Ascending aorta (tissue), 2 donors: ENCODE measurements at regions of chr3 and their contacts with region 1.

Region 1: GRCh38 chr3:52705688-52706686 is at the starts of genes GLT8D1 and SPCS1:
- DNase-seq: peak in 1 of 2 donors; percentile 89
- H3K4me3 ChIP-seq: peak within 1 kb of the TSS; percentile 85 to 86
- H3K27ac ChIP-seq: peak within 1 kb of the TSS; percentile 85 to 89
- H3K4me1 ChIP-seq: peaks cover 10 to 23% of the 10 kb centered on the region in 2 donors
- H3K27me3 ChIP-seq: no peaks in the 10 kb centered on the region
- CTCF ChIP-seq: no peak
- total RNA-seq, gene GLT8D1: 38.3 TPM
- total RNA-seq, gene SPCS1: 170 TPM

Region 2: GRCh38 chr3:52730681-52731080 is 24.7 kb after region 1 on chr3:
- intact Hi-C with region 1: no loop called
- DNase-seq: peak in 1 of 2 donors; percentile 35
- H3K4me3 ChIP-seq: no peak overlapping the region
- H3K27ac ChIP-seq: no peak overlapping the region
- H3K4me1 ChIP-seq: no peaks in the 10 kb centered on the region
- H3K27me3 ChIP-seq: no peaks in the 10 kb centered on the region
- CTCF ChIP-seq: no peak

Region 3: GRCh38 chr3:52763466-52763865 is 57.5 kb after region 1 on chr3:
- intact Hi-C with region 1: no loop called
- DNase-seq: no peak
- H3K4me3 ChIP-seq: no peak overlapping the region
- H3K27ac ChIP-seq: no peak overlapping the region
- H3K4me1 ChIP-seq: no peaks in the 10 kb centered on the region
- H3K27me3 ChIP-seq: no peaks in the 10 kb centered on the region
- CTCF ChIP-seq: no peak

Region 4: DNA sequence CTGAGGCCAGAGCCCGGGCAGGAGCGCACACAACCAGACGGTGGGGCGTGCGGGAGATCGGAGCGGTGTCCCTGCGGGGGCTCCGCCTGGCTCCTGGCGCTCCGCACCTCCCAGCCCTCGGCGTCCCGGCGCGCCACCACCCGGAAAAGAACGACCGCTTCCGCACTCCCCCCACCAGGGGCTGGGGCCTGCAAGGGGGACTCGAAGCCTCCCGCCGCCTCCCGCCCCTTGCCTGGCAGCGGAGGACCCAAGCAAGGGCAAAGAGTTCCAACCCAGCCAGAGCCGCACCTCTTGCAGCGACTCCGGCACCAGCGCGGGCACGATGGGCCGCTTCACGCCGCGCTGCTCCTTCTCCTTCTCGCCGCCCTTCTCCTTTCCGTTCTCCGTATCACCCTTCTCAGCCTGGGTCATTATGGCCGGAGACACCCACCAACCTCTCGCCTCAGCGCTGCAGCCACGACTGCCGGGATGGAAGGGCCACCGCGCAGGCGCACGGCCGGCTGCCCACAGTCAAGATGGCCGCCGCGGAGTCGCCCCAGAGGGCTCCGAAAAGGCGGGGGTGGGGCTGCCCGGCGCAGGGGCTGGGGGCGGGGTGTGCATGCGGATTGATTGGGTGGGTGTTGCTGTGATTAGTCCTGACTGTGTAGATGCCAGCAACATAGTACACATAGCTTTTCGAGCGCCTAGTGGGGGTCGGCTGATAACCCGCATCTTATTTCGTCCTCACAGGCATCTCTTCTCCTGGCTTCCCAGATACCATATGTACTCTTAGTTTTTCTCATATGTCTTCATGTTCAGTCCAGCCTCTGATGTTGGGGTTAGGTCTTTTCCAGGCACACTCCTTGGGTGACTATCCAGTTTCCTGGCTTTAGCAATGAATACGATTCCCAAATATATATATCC is 1176.0 kb after region 1 on chr3 and contains the start of gene ACTR8:
- intact Hi-C with region 1: loop called (anchors 10 kb)
- DNase-seq: peak; percentile 42 to 90
- H3K4me3 ChIP-seq: peak within 1 kb of the TSS; percentile 73 to 90
- H3K27ac ChIP-seq: peak within 1 kb of the TSS; percentile 76 to 85
- H3K4me1 ChIP-seq: peaks cover 6 to 8% of the 10 kb centered on the region in 2 donors
- H3K27me3 ChIP-seq: no peaks in the 10 kb centered on the region
- CTCF ChIP-seq: peak; percentile 13 to 36 (median 21)
- total RNA-seq, gene ACTR8: 16.6 TPM